GM13976 (cell line): ENCODE measurements at regions of chrX and their contacts with region 1.

Region 1: GRCh38 chrX:57313583-57314215 is 27.2 kb downstream of the FAAH2 start:
- DNase-seq: no peak
- CTCF ChIP-seq: no peak

Region 2: GRCh38 chrX:57379296-57379695 is 65.6 kb after region 1 on chrX:
- in situ Hi-C with region 1: loop called (anchors 10 kb)
- DNase-seq: no peak
- CTCF ChIP-seq: no peak